ENCODE measurements at regions of chr3 and their contacts with region 1.

Region 1: GRCh38 chr3:55169608-55170010 is 241.8 kb upstream of the LRTM1 start:
- DNase-seq: no peak
- H3K4me3 ChIP-seq: no peak overlapping the region
- H3K27ac ChIP-seq: no peak overlapping the region
- H3K4me1 ChIP-seq: no peaks in the 10 kb centered on the region
- H3K27me3 ChIP-seq: no peaks in the 10 kb centered on the region
- CTCF ChIP-seq: no peak
- POLR2A ChIP-seq: no peak

Region 2: DNA sequence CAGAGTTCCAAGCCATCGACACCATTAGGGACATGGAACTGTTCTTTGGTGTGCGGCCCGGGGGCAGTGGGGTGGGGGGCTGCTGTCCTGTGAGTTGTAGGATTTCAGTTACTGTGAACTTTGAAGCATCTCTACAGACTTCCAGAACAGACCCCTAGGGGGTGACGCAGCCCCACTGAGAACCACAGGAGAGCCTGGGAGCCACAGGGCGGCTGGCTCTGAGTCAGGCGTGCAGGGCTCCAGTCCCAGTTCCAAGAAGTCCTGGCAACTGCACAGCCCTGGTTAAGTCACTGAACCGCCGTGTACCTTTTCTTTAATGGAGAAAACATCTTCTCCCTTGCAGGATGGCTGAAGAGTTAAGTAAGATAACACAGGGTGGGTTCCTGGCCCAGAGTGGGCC is 218.2 kb before region 1 on chr3:
- intact Hi-C with region 1: loop called in 1 of 2 experiments (anchors 10 kb)
- DNase-seq: peak; percentile 74 to 92 (median 87)
- H3K4me3 ChIP-seq: no peak overlapping the region
- H3K27ac ChIP-seq: no peak overlapping the region
- H3K4me1 ChIP-seq: no peaks in the 10 kb centered on the region
- H3K27me3 ChIP-seq: no peaks in the 10 kb centered on the region
- CTCF ChIP-seq: peak; percentile 56 to 71 (median 66)
- POLR2A ChIP-seq: no peak

Region 3: DNA sequence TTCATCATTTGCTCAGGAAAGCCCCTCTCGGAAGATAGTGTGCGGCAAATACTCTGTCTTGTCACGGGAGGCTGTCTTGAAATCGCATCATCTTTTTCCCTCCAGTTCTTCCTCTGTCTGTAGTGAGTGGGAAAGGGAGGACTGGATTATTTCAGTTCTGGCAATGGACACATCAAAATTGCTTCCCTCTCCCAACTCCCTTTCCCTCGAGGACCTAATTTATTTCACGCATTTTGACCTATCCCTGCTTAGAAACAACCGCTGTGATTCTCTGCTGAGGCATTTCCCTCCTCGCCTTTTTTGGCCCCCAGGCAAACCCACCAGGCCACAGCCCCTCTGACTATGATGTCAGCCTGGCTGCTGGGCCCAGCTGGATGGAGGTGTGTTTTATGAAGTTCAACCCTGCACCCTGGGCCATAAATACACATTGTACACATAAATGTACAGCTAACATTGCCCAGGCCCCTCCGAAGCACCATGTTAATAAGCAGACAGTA is 103.0 kb before region 1 on chr3:
- intact Hi-C with region 1: no loop called
- DNase-seq: no peak
- H3K4me3 ChIP-seq: no peak overlapping the region
- H3K27ac ChIP-seq: no peak overlapping the region
- H3K4me1 ChIP-seq: no peaks in the 10 kb centered on the region
- H3K27me3 ChIP-seq: no peaks in the 10 kb centered on the region
- CTCF ChIP-seq: no peak
- POLR2A ChIP-seq: no peak